ENCODE measurements at regions of chrX and their contacts with region 1.

Region 1: DNA sequence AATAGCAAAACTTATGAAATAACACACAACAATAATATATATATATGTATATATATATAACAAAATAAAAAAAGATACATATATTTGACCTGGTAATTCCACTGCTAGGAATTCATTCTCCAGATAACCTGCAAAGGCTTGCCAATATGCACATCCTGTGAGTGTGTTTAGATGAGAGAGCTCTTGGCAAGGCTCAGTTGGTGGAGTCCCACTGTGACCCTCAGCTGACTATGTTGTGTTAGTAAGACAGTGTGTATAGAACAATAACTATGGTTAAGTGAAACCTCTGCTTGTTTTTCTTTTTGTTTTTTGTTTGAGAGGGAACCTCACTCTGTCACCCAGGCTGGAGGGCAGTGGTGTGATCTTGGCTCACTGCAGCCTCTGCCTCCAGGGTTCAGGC is 39.5 kb upstream of the RBMX start:
- DNase-seq: no peak
- H3K4me3 ChIP-seq: no peak overlapping the region
- H3K27ac ChIP-seq: no peak overlapping the region
- H3K4me1 ChIP-seq: no peaks in the 10 kb centered on the region
- H3K27me3 ChIP-seq: no peaks in the 10 kb centered on the region
- CTCF ChIP-seq: no peak

Region 2: GRCh38 chrX:136711147-136711546 is 208.9 kb before region 1 on chrX:
- CTCF ChIA-PET with region 1: no interaction called
- POLR2A ChIA-PET with region 1: no interaction called
- intact Hi-C with region 1: loop called (anchors 1 kb)
- DNase-seq: peak; percentile 36 to 44
- H3K4me3 ChIP-seq: no peak overlapping the region
- H3K27ac ChIP-seq: no peak overlapping the region
- H3K4me1 ChIP-seq: no peaks in the 10 kb centered on the region
- H3K27me3 ChIP-seq: no peaks in the 10 kb centered on the region
- CTCF ChIP-seq: peak; percentile 65

Region 3: GRCh38 chrX:136880452-136881013 is 39.5 kb before region 1 on chrX and contains the start of gene RBMX:
- CTCF ChIA-PET with region 1: no interaction called
- POLR2A ChIA-PET with region 1: no interaction called
- intact Hi-C with region 1: loop called (anchors 2 kb)
- DNase-seq: peak; percentile 81 to 92
- H3K4me3 ChIP-seq: peak within 1 kb of the TSS; percentile 97
- H3K27ac ChIP-seq: peak within 1 kb of the TSS; percentile 69
- H3K4me1 ChIP-seq: peaks cover 4% of the 10 kb centered on the region; the same call in 1 of the 2 replicates
- H3K27me3 ChIP-seq: no peaks in the 10 kb centered on the region
- CTCF ChIP-seq: no peak
- total RNA-seq, gene RBMX: 275 and 285 TPM in 2 replicates